ENCODE measurements at regions of chr2 and their contacts with region 1.

Region 1: GRCh38 chr2:213251618-213252017 is 32.6 kb upstream of the SPAG16 start:
- DNase-seq: peak; percentile 72
- ATAC-seq: peak; percentile 74
- H3K4me3 ChIP-seq: no peak overlapping the region
- H3K27ac ChIP-seq: no peak overlapping the region
- H3K4me1 ChIP-seq: peaks cover 24% of the 10 kb centered on the region
- H3K27me3 ChIP-seq: no peaks in the 10 kb centered on the region
- CTCF ChIP-seq: peak; percentile 78
- EP300 ChIP-seq: no peak
- POLR2A ChIP-seq: no peak
- RAD21 ChIP-seq: peak; percentile 67

Region 2: DNA sequence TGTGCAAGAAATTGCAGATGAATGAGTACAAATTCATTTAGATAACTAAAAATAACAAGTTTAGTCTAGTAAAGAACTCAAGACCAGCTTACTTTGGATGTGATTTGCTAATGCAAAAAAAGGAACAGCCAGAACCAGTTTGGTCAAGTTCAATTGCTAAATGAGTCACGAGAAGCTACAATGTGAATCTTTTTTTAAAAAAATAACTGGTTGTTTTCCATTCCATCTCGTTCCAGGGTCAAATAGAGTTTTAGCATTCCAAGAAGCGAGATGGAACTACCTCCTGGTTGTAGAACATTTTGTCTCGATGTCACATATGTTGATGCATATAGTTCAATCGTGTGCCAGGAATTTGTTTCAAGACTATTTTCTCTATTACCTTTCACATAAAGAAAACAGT is 35.2 kb before region 1 on chr2:
- CTCF ChIA-PET with region 1: no interaction called
- POLR2A ChIA-PET with region 1: no interaction called
- in situ Hi-C with region 1: no loop called
- intact Hi-C with region 1: no loop called
- DNase-seq: no peak
- ATAC-seq: no peak
- H3K4me3 ChIP-seq: no peak overlapping the region
- H3K27ac ChIP-seq: no peak overlapping the region
- H3K4me1 ChIP-seq: no peaks in the 10 kb centered on the region
- H3K27me3 ChIP-seq: no peaks in the 10 kb centered on the region
- CTCF ChIP-seq: no peak
- EP300 ChIP-seq: no peak
- POLR2A ChIP-seq: no peak
- RAD21 ChIP-seq: no peak

Region 3: DNA sequence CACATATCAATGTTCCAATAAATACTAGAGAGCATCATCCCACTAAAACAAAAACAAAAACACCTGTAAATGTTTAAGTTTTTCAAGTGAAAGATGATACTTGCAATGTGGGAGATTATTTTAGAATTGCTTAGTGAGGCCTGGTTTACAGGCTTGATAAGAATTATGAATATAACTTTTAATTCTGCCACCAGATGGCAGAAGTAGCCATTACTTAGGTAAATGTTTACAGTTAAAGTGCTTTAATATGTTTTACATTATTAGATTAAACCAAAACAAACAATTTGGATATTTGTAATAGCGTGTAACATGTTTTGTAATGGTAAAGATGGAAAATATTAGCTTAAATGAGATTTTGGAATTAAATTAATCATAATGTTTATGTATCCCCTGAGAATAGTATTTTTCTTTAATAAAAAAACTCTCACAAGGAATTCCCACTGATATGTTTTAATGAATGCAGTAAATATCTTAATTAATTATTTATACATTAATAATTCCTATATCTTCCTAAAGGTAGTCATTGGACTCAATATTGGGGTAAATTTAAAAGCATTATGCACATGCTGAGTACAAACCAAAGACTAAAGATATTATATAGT is 554.6 kb after region 1 on chr2:
- CTCF ChIA-PET with region 1: no interaction called
- POLR2A ChIA-PET with region 1: no interaction called
- in situ Hi-C with region 1: no loop called
- intact Hi-C with region 1: loop called (anchors 5 kb)
- DNase-seq: peak; percentile 9
- ATAC-seq: no peak
- H3K4me3 ChIP-seq: no peak overlapping the region
- H3K27ac ChIP-seq: no peak overlapping the region
- H3K4me1 ChIP-seq: no peaks in the 10 kb centered on the region
- H3K27me3 ChIP-seq: no peaks in the 10 kb centered on the region
- CTCF ChIP-seq: 0 out of 2 replicates have a peak, but pooled peaks have one; percentile 5
- EP300 ChIP-seq: no peak
- POLR2A ChIP-seq: no peak
- RAD21 ChIP-seq: no peak

Region 4: DNA sequence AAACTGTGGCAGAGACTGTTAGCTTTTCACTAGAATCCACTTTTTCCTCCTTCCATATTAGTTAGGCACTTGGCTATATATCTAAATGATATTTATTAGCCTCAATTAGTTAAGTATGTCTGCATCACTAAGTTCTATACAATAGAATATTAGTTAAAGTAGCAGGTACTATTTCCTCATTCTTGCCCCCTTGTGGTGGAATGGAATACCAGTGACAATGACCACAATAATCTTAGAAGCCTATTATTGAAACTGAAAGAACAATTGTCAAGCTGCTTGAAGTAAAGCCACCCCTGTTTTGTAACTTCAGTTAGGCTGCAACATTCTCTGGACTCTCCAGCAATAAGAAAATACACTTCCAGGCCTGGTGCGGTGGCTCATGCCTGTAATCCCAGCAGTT is 682.9 kb after region 1 on chr2:
- CTCF ChIA-PET with region 1: interaction called, 27 read pairs
- POLR2A ChIA-PET with region 1: no interaction called
- in situ Hi-C with region 1: loop called (anchors 5 kb)
- intact Hi-C with region 1: loop called (anchors 1 kb)
- DNase-seq: peak; percentile 44
- ATAC-seq: peak; percentile 87
- H3K4me3 ChIP-seq: peak overlapping the region in 1 of 3 experiments; percentile 11; a peak in 2 of 6 replicates
- H3K27ac ChIP-seq: no peak overlapping the region
- H3K4me1 ChIP-seq: no peaks in the 10 kb centered on the region
- H3K27me3 ChIP-seq: no peaks in the 10 kb centered on the region; a peak in 1 of 5 replicates
- CTCF ChIP-seq: peak; percentile 60
- EP300 ChIP-seq: no peak
- POLR2A ChIP-seq: no peak
- RAD21 ChIP-seq: no peak

Region 5: DNA sequence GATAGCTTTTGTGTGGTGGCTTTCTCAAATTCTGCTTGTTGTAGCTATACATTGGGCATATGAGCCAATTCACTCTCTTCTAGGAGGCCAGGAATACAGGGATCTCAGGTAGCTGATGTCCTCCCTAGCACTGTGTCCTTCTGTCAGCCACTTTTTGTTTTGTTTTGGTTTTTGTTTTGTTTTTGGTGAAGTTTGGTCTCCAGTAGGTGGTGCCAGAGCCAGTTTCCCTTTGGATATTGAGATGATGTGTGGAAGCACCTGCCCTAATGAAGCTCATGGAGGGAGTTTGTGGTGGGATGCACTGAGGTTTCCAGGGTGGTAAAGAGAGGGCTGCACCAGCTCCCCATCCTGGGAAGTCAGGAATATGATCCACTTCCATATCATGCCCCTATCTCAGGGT is 1058.7 kb after region 1 on chr2:
- CTCF ChIA-PET with region 1: no interaction called
- POLR2A ChIA-PET with region 1: no interaction called
- in situ Hi-C with region 1: no loop called
- intact Hi-C with region 1: loop called (anchors 5 kb)
- DNase-seq: peak; percentile 7
- ATAC-seq: peak; percentile 80
- H3K4me3 ChIP-seq: no peak overlapping the region
- H3K27ac ChIP-seq: no peak overlapping the region
- H3K4me1 ChIP-seq: no peaks in the 10 kb centered on the region
- H3K27me3 ChIP-seq: no peaks in the 10 kb centered on the region
- CTCF ChIP-seq: peak; percentile 41
- EP300 ChIP-seq: no peak
- POLR2A ChIP-seq: no peak
- RAD21 ChIP-seq: no peak

Region 6: DNA sequence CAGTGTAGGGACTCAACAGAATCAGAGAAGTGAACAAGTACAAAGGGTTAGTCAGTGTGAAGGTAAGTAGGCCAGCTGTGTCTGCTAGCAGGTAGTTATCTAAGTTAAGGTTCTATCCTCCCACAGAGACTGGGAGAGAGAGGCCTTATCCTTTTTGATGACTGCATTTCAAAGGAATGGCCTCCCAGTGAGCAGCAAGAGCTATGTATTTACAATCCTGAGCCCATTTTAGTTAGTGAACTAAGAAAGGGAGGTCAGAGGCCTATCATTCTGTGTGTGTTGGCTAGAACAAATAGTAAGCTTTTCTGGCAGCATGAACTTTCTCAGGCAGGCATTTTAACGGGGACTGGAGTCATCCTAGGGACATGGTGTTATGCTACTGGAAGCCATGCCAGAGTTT is 1342.1 kb after region 1 on chr2:
- CTCF ChIA-PET with region 1: no interaction called
- POLR2A ChIA-PET with region 1: no interaction called
- in situ Hi-C with region 1: no loop called
- intact Hi-C with region 1: loop called (anchors 1 kb)
- DNase-seq: peak; percentile 53
- ATAC-seq: peak; percentile 43; the same call in 1 of the 3 replicates
- H3K4me3 ChIP-seq: no peak overlapping the region
- H3K27ac ChIP-seq: no peak overlapping the region
- H3K4me1 ChIP-seq: no peaks in the 10 kb centered on the region
- H3K27me3 ChIP-seq: no peaks in the 10 kb centered on the region
- CTCF ChIP-seq: no peak
- EP300 ChIP-seq: no peak
- POLR2A ChIP-seq: no peak
- RAD21 ChIP-seq: no peak

Region 7: GRCh38 chr2:214809751-214810564 is 1558.3 kb after region 1 on chr2:
- CTCF ChIA-PET with region 1: no interaction called
- POLR2A ChIA-PET with region 1: no interaction called
- in situ Hi-C with region 1: loop called (anchors 10 kb)
- intact Hi-C with region 1: no loop called
- DNase-seq: peak; percentile 96
- ATAC-seq: peak; percentile 94
- H3K4me3 ChIP-seq: peak overlapping the region; percentile 90 to 95 (median 93)
- H3K27ac ChIP-seq: peak overlapping the region; percentile 85
- H3K4me1 ChIP-seq: peaks cover 47% of the 10 kb centered on the region
- H3K27me3 ChIP-seq: no peaks in the 10 kb centered on the region
- CTCF ChIP-seq: peak; percentile 5; the same call in 1 of the 2 replicates
- EP300 ChIP-seq: peak in 1 of 2 experiments; percentile 11; a peak in 1 of 4 replicates
- POLR2A ChIP-seq: peak; percentile 89 to 93
- RAD21 ChIP-seq: peak; percentile 48

Measured in HepG2 (cell line).